GM12878 (cell line): ENCODE measurements at regions of chr11 and their contacts with region 1.

Region 1: GRCh38 chr11:67317205-67317887 is 14.0 kb downstream of the SSH3 start:
- DNase-seq: peak; percentile 92
- ATAC-seq: peak; percentile 88
- H3K4me3 ChIP-seq: peak overlapping the region; percentile 80
- H3K27ac ChIP-seq: peak overlapping the region; percentile 85
- H3K4me1 ChIP-seq: peaks cover 3% of the 10 kb centered on the region
- H3K27me3 ChIP-seq: no peaks in the 10 kb centered on the region
- CTCF ChIP-seq: peak; percentile 87 to 97 (median 96); a peak in 5 of 6 replicates
- EP300 ChIP-seq: no peak
- POLR2A ChIP-seq: peak; percentile 71
- RAD21 ChIP-seq: peak; percentile 88

Region 2: GRCh38 chr11:67082035-67082791 is 235.1 kb before region 1 on chr11:
- CTCF ChIA-PET with region 1: interaction called, 7 read pairs
- POLR2A ChIA-PET with region 1: interaction called, 4 read pairs
- RAD21 ChIA-PET with region 1: interaction called, 6 read pairs
- SMC1A ChIA-PET with region 1: interaction called, 5 read pairs
- in situ Hi-C with region 1: no loop called
- intact Hi-C with region 1: loop called (anchors 1 kb)
- DNase-seq: no peak
- ATAC-seq: peak; percentile 7; the same call in 2 of the 3 replicates
- H3K4me3 ChIP-seq: peak overlapping the region; percentile 5; the same call in 1 of the 2 replicates
- H3K27ac ChIP-seq: no peak overlapping the region
- H3K4me1 ChIP-seq: peaks cover 20% of the 10 kb centered on the region
- H3K27me3 ChIP-seq: no peaks in the 10 kb centered on the region
- CTCF ChIP-seq: peak in 2 of 3 experiments; percentile 11 to 15; a peak in 1 of 6 replicates
- EP300 ChIP-seq: no peak
- POLR2A ChIP-seq: no peak
- RAD21 ChIP-seq: peak; percentile 40; the same call in 1 of the 2 replicates

Region 3: GRCh38 chr11:67252831-67253239 is 64.5 kb before region 1 on chr11:
- CTCF ChIA-PET with region 1: interaction called, 14 read pairs
- POLR2A ChIA-PET with region 1: no interaction called
- RAD21 ChIA-PET with region 1: interaction called, 5 read pairs
- SMC1A ChIA-PET with region 1: interaction called, 3 read pairs
- in situ Hi-C with region 1: no loop called
- intact Hi-C with region 1: no loop called
- DNase-seq: no peak
- ATAC-seq: peak; percentile 74
- H3K4me3 ChIP-seq: no peak overlapping the region
- H3K27ac ChIP-seq: no peak overlapping the region
- H3K4me1 ChIP-seq: no peaks in the 10 kb centered on the region
- H3K27me3 ChIP-seq: no peaks in the 10 kb centered on the region
- CTCF ChIP-seq: peak; percentile 32 to 44 (median 35); a peak in 4 of 6 replicates
- EP300 ChIP-seq: no peak
- POLR2A ChIP-seq: peak; percentile 46; the same call in 1 of the 2 replicates
- RAD21 ChIP-seq: peak; percentile 38

Region 4: DNA sequence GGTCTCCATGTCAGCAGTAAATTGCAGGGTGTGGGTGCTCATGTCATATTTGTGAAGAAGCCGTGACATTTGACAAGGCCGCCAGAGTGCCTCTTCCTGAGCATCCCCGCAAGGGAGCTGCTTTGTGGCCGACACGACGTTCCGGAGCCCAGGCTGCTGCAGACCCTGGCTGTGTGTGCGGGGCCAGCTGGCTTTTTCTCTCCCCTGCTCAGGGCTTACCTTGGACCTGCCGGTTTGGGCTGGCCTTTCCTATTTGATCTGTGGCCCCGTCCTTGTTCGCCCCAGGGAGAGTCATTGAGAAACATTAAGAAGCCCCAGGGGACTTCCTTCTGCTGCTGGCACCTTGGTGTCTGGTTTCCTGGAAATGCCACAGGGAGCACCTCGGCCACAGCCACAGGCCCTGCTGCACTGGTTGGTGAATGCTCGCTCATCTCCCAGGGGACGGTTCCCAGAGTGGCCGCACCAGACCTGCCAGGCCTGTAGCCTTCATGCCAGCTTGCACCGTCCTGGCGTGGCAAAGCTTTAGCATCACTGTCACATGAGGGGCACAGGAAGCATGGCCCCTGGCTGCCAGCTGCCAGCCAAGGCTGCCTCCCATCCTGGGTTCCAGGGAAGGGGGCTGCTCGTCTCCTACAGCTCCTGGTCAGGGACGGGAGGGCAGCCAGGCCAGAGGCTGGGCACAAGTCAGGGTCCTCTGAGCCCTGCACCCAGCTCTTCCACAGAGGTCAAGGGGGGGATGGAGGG is 45.6 kb before region 1 on chr11:
- CTCF ChIA-PET with region 1: interaction called, 32 read pairs
- POLR2A ChIA-PET with region 1: interaction called, 23 read pairs
- RAD21 ChIA-PET with region 1: interaction called, 31 read pairs
- SMC1A ChIA-PET with region 1: interaction called, 20 read pairs
- in situ Hi-C with region 1: no loop called
- intact Hi-C with region 1: loop called (anchors 1 kb)
- DNase-seq: peak; percentile 39
- ATAC-seq: peak; percentile 14
- H3K4me3 ChIP-seq: peak overlapping the region; percentile 81
- H3K27ac ChIP-seq: peak overlapping the region; percentile 98
- H3K4me1 ChIP-seq: peaks cover 74% of the 10 kb centered on the region
- H3K27me3 ChIP-seq: no peaks in the 10 kb centered on the region
- CTCF ChIP-seq: no peak
- EP300 ChIP-seq: no peak
- POLR2A ChIP-seq: 0 out of 2 replicates have a peak, but pooled peaks have one; percentile 24
- RAD21 ChIP-seq: no peak

Region 5: DNA sequence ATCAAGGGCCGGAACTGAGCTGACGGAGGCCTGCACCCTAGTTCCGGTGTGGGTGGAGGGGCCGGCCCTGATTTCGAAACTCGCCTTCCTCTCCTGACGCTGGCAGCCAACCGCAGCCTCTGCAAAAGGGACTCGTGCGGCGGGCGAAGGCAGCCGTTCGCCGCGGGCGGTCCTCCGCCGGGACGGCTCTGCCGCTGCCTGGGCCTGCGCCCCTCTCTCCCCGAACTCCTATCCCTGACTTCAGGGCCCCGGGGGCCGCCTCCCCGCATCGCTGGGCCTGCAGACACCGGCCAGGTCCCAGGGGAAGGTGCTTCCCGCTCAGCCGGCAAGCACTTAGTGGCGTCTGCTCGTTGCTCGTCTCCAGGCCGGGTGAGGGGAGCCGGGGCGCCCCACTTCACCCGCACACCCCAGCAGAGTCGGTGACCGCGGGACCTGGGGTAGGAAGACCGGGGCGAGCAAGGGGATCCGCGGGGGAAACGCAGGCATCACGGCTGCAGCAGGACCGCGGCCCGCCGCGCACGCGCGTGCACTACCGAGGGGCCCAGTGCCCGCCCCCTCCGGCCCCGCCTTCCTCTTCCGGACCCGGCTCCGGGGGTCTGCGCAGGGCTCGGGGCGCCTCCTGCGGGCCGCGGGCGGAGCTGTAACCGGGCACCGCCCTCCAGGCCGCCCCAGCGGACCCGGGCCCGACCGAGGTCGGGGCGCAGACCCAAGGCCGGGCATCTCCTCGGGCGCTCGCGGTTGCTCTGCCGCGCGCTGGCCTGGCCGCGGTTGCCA is 28.7 kb before region 1 on chr11:
- CTCF ChIA-PET with region 1: interaction called, 21 read pairs
- POLR2A ChIA-PET with region 1: interaction called, 7 read pairs
- RAD21 ChIA-PET with region 1: interaction called, 28 read pairs
- SMC1A ChIA-PET with region 1: interaction called, 12 read pairs
- in situ Hi-C with region 1: no loop called
- intact Hi-C with region 1: loop called (anchors 1 kb)
- DNase-seq: peak; percentile 61
- ATAC-seq: peak; percentile 88
- H3K4me3 ChIP-seq: peak overlapping the region; percentile 97
- H3K27ac ChIP-seq: peak overlapping the region; percentile 99
- H3K4me1 ChIP-seq: peaks cover 26% of the 10 kb centered on the region
- H3K27me3 ChIP-seq: no peaks in the 10 kb centered on the region
- CTCF ChIP-seq: peak in 2 of 3 experiments; percentile 24 to 75; a peak in 4 of 6 replicates
- EP300 ChIP-seq: peak; percentile 17 to 67; a peak in 1 of 4 replicates
- POLR2A ChIP-seq: peak; percentile 93
- RAD21 ChIP-seq: peak; percentile 68

Region 6: DNA sequence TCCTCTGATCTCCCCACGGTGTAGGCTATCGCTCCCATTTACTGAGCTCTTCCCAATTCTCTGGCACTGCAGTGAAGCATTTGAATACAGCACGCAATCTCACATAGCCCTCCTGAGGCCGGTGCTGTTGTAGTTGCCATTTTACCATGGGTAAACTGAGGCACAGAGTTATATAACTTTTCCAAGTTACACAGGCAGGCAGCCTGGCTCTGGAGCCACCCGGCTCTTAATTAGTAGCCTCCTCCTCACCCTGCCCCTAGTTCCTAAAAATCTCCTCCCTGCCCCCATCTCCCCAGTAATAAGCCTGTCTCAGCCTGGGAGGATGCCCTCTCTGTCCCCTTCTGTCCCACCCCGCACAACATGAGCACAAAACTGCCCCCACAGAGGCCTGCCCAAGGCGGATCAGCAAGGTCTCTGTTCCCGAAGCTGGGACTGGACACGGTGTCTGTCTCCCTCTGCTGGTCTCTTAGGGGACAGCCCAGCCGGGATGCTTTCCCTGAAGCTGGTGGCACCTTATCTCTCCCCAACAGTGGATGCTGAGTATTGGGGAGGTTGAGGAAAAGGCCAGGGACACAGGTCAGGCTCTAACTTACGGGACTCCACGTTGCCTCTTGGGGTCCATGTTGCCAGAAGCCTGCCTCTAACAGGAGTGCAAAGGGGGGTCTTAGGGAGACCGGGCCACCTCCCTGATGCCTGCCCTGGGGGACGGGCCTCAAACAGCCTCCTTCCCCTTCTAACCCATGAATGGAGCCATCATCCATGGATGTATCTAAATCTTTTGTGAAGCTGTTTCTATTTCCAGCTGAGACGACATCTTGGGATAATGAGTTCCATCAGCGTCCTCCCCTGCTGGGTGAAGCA is 65.2 kb after region 1 on chr11:
- CTCF ChIA-PET with region 1: interaction called, 95 read pairs
- POLR2A ChIA-PET with region 1: interaction called, 4 read pairs
- RAD21 ChIA-PET with region 1: interaction called, 64 read pairs
- SMC1A ChIA-PET with region 1: interaction called, 82 read pairs
- in situ Hi-C with region 1: no loop called
- intact Hi-C with region 1: loop called (anchors 2 kb)
- DNase-seq: no peak
- ATAC-seq: peak; percentile 93
- H3K4me3 ChIP-seq: no peak overlapping the region
- H3K27ac ChIP-seq: no peak overlapping the region
- H3K4me1 ChIP-seq: peaks cover 19% of the 10 kb centered on the region
- H3K27me3 ChIP-seq: peaks cover 0 to 3% of the 10 kb centered on the region in 2 experiments; a peak in 2 of 4 replicates
- CTCF ChIP-seq: peak; percentile 99; a peak in 5 of 6 replicates
- EP300 ChIP-seq: no peak
- POLR2A ChIP-seq: no peak
- RAD21 ChIP-seq: peak; percentile 99

Region 7: GRCh38 chr11:67416416-67417335 is 99.3 kb after region 1 on chr11:
- CTCF ChIA-PET with region 1: no interaction called
- POLR2A ChIA-PET with region 1: no interaction called
- RAD21 ChIA-PET with region 1: no interaction called
- SMC1A ChIA-PET with region 1: no interaction called
- in situ Hi-C with region 1: no loop called
- intact Hi-C with region 1: no loop called
- DNase-seq: no peak
- ATAC-seq: no peak
- H3K4me3 ChIP-seq: no peak overlapping the region
- H3K27ac ChIP-seq: no peak overlapping the region
- H3K4me1 ChIP-seq: peaks cover 8% of the 10 kb centered on the region
- H3K27me3 ChIP-seq: peaks cover 0 to 5% of the 10 kb centered on the region in 2 experiments; a peak in 3 of 4 replicates
- CTCF ChIP-seq: no peak
- EP300 ChIP-seq: no peak
- POLR2A ChIP-seq: no peak
- RAD21 ChIP-seq: no peak